ENCODE measurements at regions of chr18 and their contacts with region 1.

Region 1: GRCh38 chr18:6885992-6886796 is 156.7 kb downstream of the ARHGAP28 start:
- DNase-seq: no peak
- H3K4me3 ChIP-seq: no peak overlapping the region
- H3K27ac ChIP-seq: no peak overlapping the region
- H3K4me1 ChIP-seq: peaks cover 0 to 18% (median 9%) of the 10 kb centered on the region in 4 donors
- H3K27me3 ChIP-seq: no peaks in the 10 kb centered on the region
- CTCF ChIP-seq: peak; percentile 62 to 68 (median 67)
- EP300 ChIP-seq: no peak
- POLR2A ChIP-seq: no peak

Region 2: DNA sequence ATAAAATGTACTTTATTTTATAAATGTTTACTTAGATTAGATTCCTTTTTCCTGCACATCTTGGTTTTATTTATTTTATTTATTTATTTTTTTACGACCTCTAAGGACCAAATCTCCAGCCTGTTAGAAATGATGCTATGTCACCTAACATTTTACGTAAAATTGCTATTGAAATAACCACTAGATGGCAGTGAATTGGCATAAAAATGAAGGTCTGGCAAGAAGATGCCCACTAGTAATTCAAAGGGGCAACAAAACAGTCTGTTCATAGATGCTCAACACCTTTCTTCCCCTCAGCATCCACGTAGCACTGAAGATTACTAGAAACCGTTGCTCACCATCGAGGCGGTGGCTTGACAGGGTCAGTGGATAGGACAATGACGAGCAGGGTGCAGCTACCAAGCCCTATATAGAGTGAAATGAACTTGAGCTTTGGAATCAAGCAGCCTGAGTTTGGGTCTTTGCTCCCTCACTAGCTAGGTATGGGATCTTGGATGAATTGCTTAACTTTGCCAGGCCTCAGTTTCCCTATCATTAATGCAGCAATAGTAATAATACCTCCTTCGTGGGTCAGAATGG is 342.8 kb before region 1 on chr18:
- intact Hi-C with region 1: loop called (anchors 2 kb)
- DNase-seq: no peak
- H3K4me3 ChIP-seq: no peak overlapping the region
- H3K27ac ChIP-seq: no peak overlapping the region
- H3K4me1 ChIP-seq: no peaks in the 10 kb centered on the region
- H3K27me3 ChIP-seq: peaks cover 0 to 6% (median 0%) of the 10 kb centered on the region in 4 donors
- CTCF ChIP-seq: peak; percentile 47 to 54 (median 53)
- EP300 ChIP-seq: no peak
- POLR2A ChIP-seq: no peak

Region 3: DNA sequence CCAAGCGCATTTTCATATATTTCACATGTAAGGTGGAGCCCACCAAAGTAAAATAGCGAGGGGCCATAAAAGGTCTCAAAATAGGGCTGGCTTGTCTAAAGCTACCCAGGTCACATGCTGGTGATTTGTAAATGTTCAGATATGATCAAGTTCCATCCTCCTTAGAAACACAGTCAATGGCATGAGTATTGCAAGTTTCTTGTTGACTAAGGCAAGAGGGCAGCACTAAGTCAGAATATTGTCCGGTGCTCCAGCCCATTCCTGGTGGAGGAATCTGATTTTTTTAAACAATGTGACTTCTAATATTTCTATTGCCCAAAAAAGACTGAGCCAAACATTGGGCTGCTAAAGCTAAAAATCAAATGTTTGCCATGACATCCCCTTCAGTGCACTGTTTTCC is 146.3 kb after region 1 on chr18:
- intact Hi-C with region 1: no loop called
- DNase-seq: no peak
- H3K4me3 ChIP-seq: no peak overlapping the region
- H3K27ac ChIP-seq: no peak overlapping the region
- H3K4me1 ChIP-seq: no peaks in the 10 kb centered on the region
- H3K27me3 ChIP-seq: no peaks in the 10 kb centered on the region
- CTCF ChIP-seq: no peak
- EP300 ChIP-seq: no peak
- POLR2A ChIP-seq: no peak

Region 4: DNA sequence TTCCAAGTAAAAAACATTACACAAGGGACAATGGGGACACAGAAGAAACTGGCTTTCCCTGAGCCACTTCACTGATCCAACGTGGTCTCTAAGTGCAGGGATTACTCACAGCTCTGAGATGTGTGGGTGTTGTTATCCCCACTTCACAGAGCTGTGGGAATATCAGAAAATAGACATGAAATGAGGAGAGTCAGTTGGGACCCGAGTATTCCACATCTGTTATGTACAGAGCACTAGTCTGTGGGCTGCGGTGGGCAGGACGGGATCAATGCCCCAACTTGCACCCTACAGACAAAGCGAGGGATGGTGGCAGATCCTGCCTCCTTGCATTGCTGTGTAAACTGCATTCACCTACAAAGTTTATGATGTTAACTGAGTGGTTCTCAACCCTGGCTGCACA is 219.7 kb after region 1 on chr18:
- intact Hi-C with region 1: no loop called
- DNase-seq: no peak
- H3K4me3 ChIP-seq: no peak overlapping the region
- H3K27ac ChIP-seq: no peak overlapping the region
- H3K4me1 ChIP-seq: no peaks in the 10 kb centered on the region
- H3K27me3 ChIP-seq: peaks cover 0 to 24% (median 0%) of the 10 kb centered on the region in 4 donors
- CTCF ChIP-seq: no peak
- EP300 ChIP-seq: no peak
- POLR2A ChIP-seq: no peak